CD14-positive monocyte (primary cell): ENCODE measurements at regions of chr2 and their contacts with region 1.

Region 1: GRCh38 chr2:69026026-69026425 is 13.0 kb downstream of the ANTXR1 start:
- DNase-seq: peak; percentile 49 to 72 (median 61)
- H3K4me3 ChIP-seq: no peak overlapping the region
- H3K4me3 Mint-ChIP-seq: no peak overlapping the region
- H3K27ac ChIP-seq: no peak overlapping the region
- H3K27ac Mint-ChIP-seq: no peak overlapping the region
- H3K4me1 ChIP-seq: no peaks in the 10 kb centered on the region
- H3K4me1 Mint-ChIP-seq: no peaks in the 10 kb centered on the region
- H3K27me3 ChIP-seq: peaks cover 11 to 14% of the 10 kb centered on the region in 2 donors
- H3K27me3 Mint-ChIP-seq: peaks cover 4 to 17% (median 8%) of the 10 kb centered on the region in 3 donors
- CTCF ChIP-seq: peak; percentile 80

Region 2: GRCh38 chr2:69306822-69307578 is 281.0 kb after region 1 on chr2:
- intact Hi-C with region 1: loop called (anchors 1 to 2 kb)
- DNase-seq: peak; percentile 47 to 58 (median 57)
- H3K4me3 ChIP-seq: peak overlapping the region; percentile 18 to 85 (median 55)
- H3K4me3 Mint-ChIP-seq: peak overlapping the region; percentile 82 to 92
- H3K27ac ChIP-seq: no peak overlapping the region
- H3K27ac Mint-ChIP-seq: peak overlapping the region in 1 of 7 donors; percentile 79
- H3K4me1 ChIP-seq: peaks cover 17 to 18% of the 10 kb centered on the region in 2 donors
- H3K4me1 Mint-ChIP-seq: peaks cover 25% of the 10 kb centered on the region
- H3K27me3 ChIP-seq: peaks cover 0 to 24% of the 10 kb centered on the region in 2 donors
- H3K27me3 Mint-ChIP-seq: peaks cover 18 to 31% (median 25%) of the 10 kb centered on the region in 3 donors
- CTCF ChIP-seq: peak; percentile 90